ENCODE measurements at regions of chr19 and their contacts with region 1.

Region 1: GRCh38 chr19:58408152-58409009 is at the start of gene ZNF584:
- H3K4me3 ChIP-seq: peak within 1 kb of the TSS; percentile 98
- H3K27ac ChIP-seq: peak within 1 kb of the TSS; percentile 76
- H3K4me1 ChIP-seq: peaks cover 4% of the 10 kb centered on the region; the same call in 1 of the 2 replicates
- CTCF ChIP-seq: peak; percentile 76

Region 2: DNA sequence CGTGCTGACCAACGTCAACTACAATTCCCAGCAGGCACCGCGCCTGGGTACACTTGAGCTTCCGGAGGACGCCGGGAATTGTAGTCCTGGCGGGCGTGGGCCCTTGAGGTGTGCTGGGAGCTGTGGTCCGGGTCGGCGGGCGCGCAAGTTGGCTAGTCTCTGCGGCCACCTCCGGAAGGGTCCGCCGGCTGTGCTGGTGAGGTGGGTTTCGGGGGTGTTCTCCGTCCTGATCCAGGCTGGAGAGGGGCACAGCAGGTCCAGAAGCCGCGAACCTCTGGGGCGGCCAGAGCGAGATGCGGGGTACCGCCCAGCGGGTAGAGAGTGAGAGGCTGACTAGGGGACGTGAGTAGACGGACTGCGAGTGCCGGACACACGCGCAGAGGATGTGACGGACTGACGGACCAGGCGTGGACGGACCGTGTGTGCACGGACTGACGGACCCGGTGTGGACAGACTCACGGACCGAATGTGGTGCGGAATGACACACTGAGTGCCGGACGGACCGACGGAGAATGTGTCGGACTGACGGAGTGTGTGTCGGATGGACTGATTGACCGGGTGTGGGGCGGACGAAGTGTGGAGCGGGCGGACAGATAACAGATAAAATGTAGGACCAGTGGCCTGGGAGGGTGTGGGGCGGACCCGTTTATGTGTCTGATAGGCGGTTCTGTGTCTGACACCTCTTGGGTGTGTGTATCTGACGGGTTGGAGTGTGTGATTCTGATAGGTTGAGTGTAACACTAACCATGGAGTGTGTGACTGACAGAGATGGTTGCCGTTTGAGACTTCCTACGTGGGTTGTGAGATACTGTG is 81.3 kb before region 1 on chr19 and contains the start of gene ZSCAN22:
- CTCF ChIA-PET with region 1: no interaction called
- POLR2A ChIA-PET with region 1: interaction called, 14 read pairs
- H3K4me3 ChIP-seq: peak within 1 kb of the TSS; percentile 98
- H3K27ac ChIP-seq: peak within 1 kb of the TSS; percentile 67; the same call in 1 of the 2 replicates
- H3K4me1 ChIP-seq: peaks cover 3% of the 10 kb centered on the region; the same call in 1 of the 2 replicates
- CTCF ChIP-seq: peak; percentile 70

Region 3: GRCh38 chr19:58386576-58387337 is 21.6 kb before region 1 on chr19 and contains the start of gene RPS5:
- CTCF ChIA-PET with region 1: no interaction called
- POLR2A ChIA-PET with region 1: interaction called, 27 read pairs
- H3K4me3 ChIP-seq: peak within 1 kb of the TSS; percentile 77
- H3K27ac ChIP-seq: peak within 1 kb of the TSS; percentile 100
- H3K4me1 ChIP-seq: peaks cover 16% of the 10 kb centered on the region
- CTCF ChIP-seq: no peak

Region 4: GRCh38 chr19:58451358-58452101 is 43.1 kb after region 1 on chr19 and contains the start of gene ZNF324B:
- CTCF ChIA-PET with region 1: interaction called, 3 read pairs
- POLR2A ChIA-PET with region 1: interaction called, 23 read pairs
- H3K4me3 ChIP-seq: peak within 1 kb of the TSS; percentile 93
- H3K27ac ChIP-seq: peak within 1 kb of the TSS; percentile 38; the same call in 1 of the 2 replicates
- H3K4me1 ChIP-seq: peaks cover 7% of the 10 kb centered on the region; the same call in 1 of the 2 replicates
- CTCF ChIP-seq: peak; percentile 67

Region 5: DNA sequence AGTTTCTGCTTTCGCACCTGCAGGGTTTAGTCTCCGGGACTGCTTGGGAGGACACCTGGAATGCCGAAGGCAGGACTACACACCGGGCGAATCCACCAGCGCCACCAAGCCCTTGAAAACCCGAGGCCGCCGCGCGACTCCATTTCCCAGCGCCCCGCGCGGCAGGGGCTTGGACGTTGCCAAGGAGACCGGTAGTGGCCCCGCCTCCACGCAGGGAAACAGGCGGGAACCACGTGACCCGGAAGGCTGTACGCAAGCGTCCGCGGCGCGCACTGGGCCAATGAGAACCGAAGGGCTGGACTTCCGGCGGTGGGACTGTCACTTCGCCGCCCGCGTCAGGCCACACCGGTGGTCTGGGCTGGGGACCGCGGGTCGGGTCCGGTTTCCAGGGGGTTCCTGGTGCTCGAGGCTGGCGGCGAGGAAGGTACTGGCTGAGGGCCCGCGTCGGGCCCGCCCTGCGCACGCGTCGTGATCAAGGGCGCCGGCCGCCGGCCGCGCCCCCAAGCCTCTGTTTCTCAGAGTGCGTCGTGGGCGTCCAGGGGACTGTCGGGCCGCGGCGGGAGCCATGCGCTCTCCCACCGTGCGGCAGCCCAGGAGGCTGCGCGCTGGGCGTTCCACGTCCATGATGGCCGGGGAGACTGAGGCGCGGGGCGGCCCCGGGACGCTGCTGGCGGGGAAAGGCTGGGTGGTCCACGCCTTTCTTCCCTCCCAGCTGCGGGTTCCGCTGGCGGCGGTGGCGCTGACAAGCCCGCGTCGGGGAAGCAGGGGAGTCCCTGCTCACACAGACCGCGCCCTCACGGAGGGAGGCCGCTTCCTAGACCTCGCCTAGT is 58.6 kb after region 1 on chr19 and contains the start of gene ZNF324:
- CTCF ChIA-PET with region 1: no interaction called
- POLR2A ChIA-PET with region 1: interaction called, 10 read pairs
- H3K4me3 ChIP-seq: peak within 1 kb of the TSS; percentile 97
- H3K27ac ChIP-seq: peak within 1 kb of the TSS; percentile 74; the same call in 1 of the 2 replicates
- H3K4me1 ChIP-seq: no peaks in the 10 kb centered on the region; the same call in 1 of the 2 replicates
- CTCF ChIP-seq: peak; percentile 49; the same call in 1 of the 2 replicates

Region 6: GRCh38 chr19:58543826-58544590 is 135.6 kb after region 1 on chr19 and contains the start of gene TRIM28:
- CTCF ChIA-PET with region 1: no interaction called
- POLR2A ChIA-PET with region 1: interaction called, 10 read pairs
- H3K4me3 ChIP-seq: peak within 1 kb of the TSS; percentile 67
- H3K27ac ChIP-seq: peak within 1 kb of the TSS; percentile 99
- H3K4me1 ChIP-seq: peaks cover 13% of the 10 kb centered on the region
- CTCF ChIP-seq: no peak; the same call in 1 of the 2 replicates